Activated CD4-positive, alpha-beta T cell treated with anti-CD3 and anti-CD28 coated beads for 36 hours (primary cell): ENCODE measurements at regions of chr3 and their contacts with region 1.

Region 1: DNA sequence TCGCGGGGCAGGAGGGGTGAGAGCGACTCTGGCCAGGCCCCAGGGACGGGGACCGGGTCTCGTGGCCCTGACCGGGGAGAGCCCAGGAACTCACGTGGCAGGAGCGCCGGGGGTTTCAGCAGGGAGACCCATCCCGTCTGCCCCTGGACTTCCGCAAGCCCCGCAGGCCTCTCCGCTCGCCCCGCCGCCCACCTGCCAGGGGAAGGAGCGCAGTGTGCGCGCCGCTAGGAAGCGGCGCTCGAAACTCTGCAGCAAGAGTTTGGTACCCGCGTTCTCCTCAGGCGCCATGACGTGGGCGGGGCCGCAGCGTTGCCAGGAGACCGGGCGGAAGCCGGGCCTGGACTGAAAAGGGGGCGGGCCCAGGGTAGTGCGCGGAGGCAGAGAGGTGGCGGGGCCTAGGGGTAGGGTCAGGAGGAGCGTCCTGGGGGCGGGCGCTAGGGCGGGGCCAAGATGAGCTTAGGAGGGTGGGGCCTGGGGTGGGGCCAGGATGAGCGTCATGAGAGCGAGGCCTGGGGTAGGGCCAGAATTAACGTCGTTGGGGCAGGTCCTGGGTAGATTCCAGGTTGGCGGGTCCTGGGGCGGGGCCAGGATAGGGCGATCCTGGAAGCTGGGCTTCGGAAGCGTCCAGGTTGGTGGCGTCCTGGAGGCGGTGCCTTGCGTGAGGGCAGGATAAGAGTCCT is 29.7 kb downstream of the ALG1L2 start:
- DNase-seq: peak; percentile 100
- ATAC-seq: peak; percentile 100
- H3K4me3 Mint-ChIP-seq: peak overlapping the region; percentile 92
- H3K27ac Mint-ChIP-seq: peak overlapping the region; percentile 98
- H3K4me1 Mint-ChIP-seq: peaks cover 16% of the 10 kb centered on the region
- H3K27me3 Mint-ChIP-seq: no peaks in the 10 kb centered on the region

Region 2: DNA sequence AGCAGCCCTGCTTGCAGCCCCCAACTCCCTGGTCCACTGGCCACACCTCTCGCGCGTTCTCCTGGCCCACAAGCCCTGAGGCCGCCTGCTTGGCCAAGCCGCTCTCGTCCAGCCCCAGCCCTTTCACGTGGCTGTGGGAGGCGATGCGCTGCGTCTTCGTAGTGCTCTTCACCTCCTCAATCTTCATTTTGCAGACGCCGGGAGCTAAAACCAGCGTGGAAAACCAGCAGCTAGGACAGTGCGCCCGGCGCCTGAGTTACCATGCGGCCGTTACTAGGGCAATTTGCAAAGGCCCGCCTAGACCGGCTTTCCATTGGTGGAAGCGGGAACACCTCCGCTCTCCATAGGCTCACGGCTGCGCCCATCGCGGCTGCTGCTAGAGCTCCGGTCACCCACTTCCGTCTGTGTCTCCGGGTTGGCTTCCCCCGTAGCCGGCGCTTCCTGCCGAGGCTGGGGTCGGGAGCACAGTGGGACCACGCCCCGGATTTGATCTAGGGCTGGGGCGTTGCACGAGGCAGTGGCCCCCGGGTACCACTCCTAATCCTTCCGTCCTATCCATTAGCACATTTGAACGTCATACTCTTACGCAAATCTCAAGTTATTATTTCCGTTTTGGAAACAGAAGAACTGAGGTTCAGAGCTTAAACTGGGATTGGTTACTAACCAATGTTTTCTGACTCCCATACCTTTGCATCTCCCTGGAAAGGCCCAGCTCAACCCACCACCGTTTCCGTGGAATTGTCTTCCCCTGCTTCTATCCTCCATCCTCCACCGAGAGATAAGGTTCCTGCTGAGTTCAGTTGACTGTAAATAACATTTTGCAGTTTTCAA is 1987.6 kb before region 1 on chr3 and contains the start of gene RUVBL1:
- CTCF ChIA-PET with region 1: no interaction called
- POLR2A ChIA-PET with region 1: no interaction called
- intact Hi-C with region 1: loop called in 1 of 2 experiments (anchors 5 kb)
- DNase-seq: peak; percentile 99
- ATAC-seq: peak; percentile 99
- H3K4me3 Mint-ChIP-seq: peak within 1 kb of the TSS; percentile 99
- H3K27ac Mint-ChIP-seq: peak within 1 kb of the TSS; percentile 96
- H3K4me1 Mint-ChIP-seq: peaks cover 30% of the 10 kb centered on the region
- H3K27me3 Mint-ChIP-seq: no peaks in the 10 kb centered on the region
- total RNA-seq, gene RUVBL1: 97.0 to 99.9 TPM

Region 3: DNA sequence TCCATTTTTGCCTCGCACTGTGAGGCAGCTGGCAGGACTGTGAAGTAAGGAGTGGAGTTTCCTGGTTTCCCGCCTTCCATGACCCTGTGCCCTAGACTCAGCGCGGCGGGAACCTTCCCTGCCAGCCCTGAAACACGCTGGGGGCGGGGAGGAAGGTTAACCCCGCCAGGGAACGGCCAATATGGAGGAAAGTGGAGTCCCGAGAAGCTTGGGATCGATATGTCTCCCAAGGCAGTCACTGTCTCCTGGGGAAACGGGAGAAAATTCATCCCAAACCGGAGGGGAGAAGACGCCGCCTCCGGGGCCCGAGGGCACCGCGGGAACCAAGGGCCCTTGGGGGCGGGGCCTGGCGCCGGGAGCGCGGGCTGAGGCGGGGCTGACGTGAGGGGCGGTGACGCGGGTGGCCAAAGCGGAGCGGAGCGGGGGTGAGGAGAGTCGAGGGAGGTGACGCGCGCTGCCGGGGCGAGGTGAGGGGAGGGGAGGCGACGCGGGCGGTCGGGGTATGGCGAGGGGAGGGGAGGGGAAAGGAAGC is 832.8 kb before region 1 on chr3 and contains the start of gene HMCES:
- CTCF ChIA-PET with region 1: no interaction called
- POLR2A ChIA-PET with region 1: no interaction called
- intact Hi-C with region 1: loop called in 1 of 2 experiments (anchors 5 kb)
- DNase-seq: peak; percentile 98
- ATAC-seq: peak; percentile 84
- H3K4me3 Mint-ChIP-seq: peak within 1 kb of the TSS; percentile 89
- H3K27ac Mint-ChIP-seq: peak within 1 kb of the TSS; percentile 95
- H3K4me1 Mint-ChIP-seq: peaks cover 55% of the 10 kb centered on the region
- H3K27me3 Mint-ChIP-seq: no peaks in the 10 kb centered on the region
- total RNA-seq, gene HMCES: 43.1 to 56.7 TPM

Region 4: GRCh38 chr3:129627429-129628168 is 483.7 kb before region 1 on chr3:
- CTCF ChIA-PET with region 1: no interaction called
- POLR2A ChIA-PET with region 1: no interaction called
- intact Hi-C with region 1: loop called in 1 of 2 experiments (anchors 2 kb)
- DNase-seq: peak; percentile 82
- ATAC-seq: peak; percentile 67
- H3K4me3 Mint-ChIP-seq: peak overlapping the region; percentile 88
- H3K27ac Mint-ChIP-seq: peak overlapping the region; percentile 67
- H3K4me1 Mint-ChIP-seq: peaks cover 13% of the 10 kb centered on the region
- H3K27me3 Mint-ChIP-seq: no peaks in the 10 kb centered on the region

Region 5: DNA sequence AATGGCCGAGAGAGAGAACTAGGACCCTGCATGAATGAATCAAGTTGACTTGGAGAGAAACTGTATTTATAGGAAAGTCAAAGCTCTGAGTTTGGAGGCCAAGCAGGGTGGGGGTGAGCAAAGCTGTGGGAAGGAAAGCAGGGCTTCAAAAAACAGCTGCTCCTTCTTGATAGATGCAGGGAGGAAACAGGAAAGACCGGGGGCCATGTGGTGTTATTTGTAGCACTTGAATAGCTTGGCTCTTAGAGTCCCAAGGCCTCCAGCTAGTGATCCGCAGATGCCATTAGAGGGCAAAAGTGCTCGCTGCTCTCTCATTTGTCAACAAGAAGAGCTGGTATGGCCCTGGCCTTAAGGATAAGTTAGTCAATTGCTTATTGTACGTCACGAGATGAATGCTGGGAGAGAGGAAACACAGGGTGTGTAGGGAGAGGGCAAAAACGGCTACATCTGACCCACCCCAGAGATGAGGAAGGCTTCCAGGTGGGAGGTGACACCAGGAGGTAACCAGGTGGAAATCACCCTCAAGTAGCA is 29.9 kb before region 1 on chr3 and contains the start of gene ALG1L2:
- CTCF ChIA-PET with region 1: no interaction called
- POLR2A ChIA-PET with region 1: no interaction called
- intact Hi-C with region 1: no loop called
- DNase-seq: no peak
- ATAC-seq: no peak
- H3K4me3 Mint-ChIP-seq: no peak within 1 kb of the TSS
- H3K27ac Mint-ChIP-seq: no peak within 1 kb of the TSS
- H3K4me1 Mint-ChIP-seq: no peaks in the 10 kb centered on the region
- H3K27me3 Mint-ChIP-seq: peaks cover 5% of the 10 kb centered on the region
- total RNA-seq, gene ALG1L2: 0.71 TPM in 1 of 2 experiments, not detected in the other

Region 6: GRCh38 chr3:130093741-130094391 is 17.5 kb before region 1 on chr3:
- CTCF ChIA-PET with region 1: interaction called, 7 read pairs
- POLR2A ChIA-PET with region 1: no interaction called
- intact Hi-C with region 1: loop called in 1 of 2 experiments (anchors 1 kb)
- DNase-seq: peak; percentile 56
- ATAC-seq: peak; percentile 39
- H3K4me3 Mint-ChIP-seq: peak overlapping the region; percentile 47
- H3K27ac Mint-ChIP-seq: peak overlapping the region; percentile 70
- H3K4me1 Mint-ChIP-seq: peaks cover 26% of the 10 kb centered on the region
- H3K27me3 Mint-ChIP-seq: no peaks in the 10 kb centered on the region

Region 7: DNA sequence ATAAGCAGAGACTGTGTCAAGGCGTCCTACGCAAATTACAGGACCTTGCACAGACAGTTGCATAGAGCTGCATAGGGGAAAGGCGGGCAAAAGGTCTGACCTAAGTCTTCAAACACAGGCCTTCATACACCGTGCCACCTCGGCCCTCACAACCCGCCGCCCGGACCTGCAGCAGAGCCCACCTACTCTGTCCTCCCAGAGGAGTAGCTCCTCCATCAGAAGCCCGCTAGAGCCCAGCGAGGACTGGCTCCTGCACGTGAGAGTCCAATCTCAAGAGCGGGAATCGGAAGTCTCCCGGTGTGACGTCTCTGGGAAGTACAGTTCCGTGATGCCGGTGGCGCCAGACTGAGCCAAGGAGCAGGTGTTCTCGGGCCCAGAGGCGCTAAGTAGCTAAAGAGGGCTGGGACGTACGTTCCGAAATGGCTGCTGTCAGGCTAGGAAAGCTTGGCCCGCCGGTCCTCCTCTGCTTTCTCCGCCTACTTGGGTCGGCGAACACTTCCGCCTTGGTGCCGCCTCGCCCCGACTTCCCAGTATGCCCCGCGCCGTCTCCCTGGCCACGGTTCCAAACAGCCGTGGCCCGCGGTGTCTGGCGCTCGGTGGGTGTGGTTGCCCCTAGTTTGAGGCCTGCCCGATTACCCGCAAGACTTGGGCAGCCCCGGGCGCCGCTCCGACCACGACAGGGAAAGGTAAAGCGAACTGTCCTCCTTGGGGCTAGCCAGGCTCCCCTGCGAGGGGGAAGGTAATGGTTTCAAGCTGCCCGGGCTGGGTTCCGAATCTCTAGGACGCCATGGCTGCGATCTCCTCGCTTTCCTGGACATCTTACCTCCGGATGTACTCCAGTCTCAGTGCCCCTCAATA is 915.2 kb after region 1 on chr3 and contains the starts of genes ASTE1 and NEK11:
- CTCF ChIA-PET with region 1: no interaction called
- POLR2A ChIA-PET with region 1: no interaction called
- intact Hi-C with region 1: loop called in 1 of 2 experiments (anchors 5 kb)
- DNase-seq: peak; percentile 95
- ATAC-seq: peak; percentile 98
- H3K4me3 Mint-ChIP-seq: peak within 1 kb of the TSS; percentile 90
- H3K27ac Mint-ChIP-seq: peak within 1 kb of the TSS; percentile 96
- H3K4me1 Mint-ChIP-seq: peaks cover 46% of the 10 kb centered on the region
- H3K27me3 Mint-ChIP-seq: no peaks in the 10 kb centered on the region
- total RNA-seq, gene ASTE1: 8.2 to 9.1 TPM
- total RNA-seq, gene NEK11: 1.0 to 1.3 TPM